ENCODE measurements at regions of chr6 and their contacts with region 1.

Region 1: DNA sequence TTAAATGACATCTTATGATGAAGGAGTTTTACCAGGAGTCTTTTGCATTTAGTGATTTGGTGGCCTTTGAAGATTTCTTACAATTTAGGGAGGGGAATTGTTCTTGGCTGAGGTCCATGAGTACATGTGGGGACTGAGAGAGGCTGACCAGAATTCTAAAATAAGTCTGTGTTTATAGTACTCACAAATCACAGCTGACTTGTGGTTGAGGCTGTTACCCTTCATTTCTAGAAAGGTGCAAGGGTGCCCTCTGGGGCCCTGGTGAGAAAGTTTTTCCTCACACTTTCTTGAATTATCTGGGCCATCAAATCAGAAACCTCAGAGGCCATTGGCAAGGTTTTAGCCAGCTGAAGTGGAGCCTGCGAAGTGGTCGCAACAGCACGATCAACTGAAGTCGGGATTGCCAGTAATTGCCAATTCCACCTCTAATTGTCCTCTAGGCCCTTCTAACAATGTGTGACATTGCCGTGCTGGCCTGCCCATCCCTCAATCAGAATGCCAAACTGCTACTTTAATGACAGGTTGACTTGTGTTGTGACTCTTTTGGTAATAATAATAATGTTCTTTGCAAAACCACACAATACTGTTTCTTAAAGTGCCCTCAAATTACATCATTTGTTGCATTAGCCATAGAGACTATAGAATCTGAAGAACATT is 221.6 kb downstream of the OGFRL1 start:
- DNase-seq: peak; percentile 8
- H3K4me3 ChIP-seq: no peak overlapping the region
- H3K27ac ChIP-seq: no peak overlapping the region
- H3K4me1 ChIP-seq: no peaks in the 10 kb centered on the region
- H3K27me3 ChIP-seq: no peaks in the 10 kb centered on the region
- CTCF ChIP-seq: peak in 3 of 4 experiments; percentile 39 to 59 (median 56)
- POLR2A ChIP-seq: no peak

Region 2: GRCh38 chr6:70171236-70171635 is 1338.9 kb before region 1 on chr6:
- intact Hi-C with region 1: no loop called
- DNase-seq: no peak
- H3K4me3 ChIP-seq: no peak overlapping the region
- H3K27ac ChIP-seq: no peak overlapping the region
- H3K4me1 ChIP-seq: no peaks in the 10 kb centered on the region
- H3K27me3 ChIP-seq: no peaks in the 10 kb centered on the region
- CTCF ChIP-seq: no peak
- POLR2A ChIP-seq: no peak

Region 3: GRCh38 chr6:70884074-70884983 is 625.9 kb before region 1 on chr6:
- intact Hi-C with region 1: loop called (anchors 5 kb)
- DNase-seq: peak; percentile 54
- H3K4me3 ChIP-seq: no peak overlapping the region
- H3K27ac ChIP-seq: no peak overlapping the region
- H3K4me1 ChIP-seq: no peaks in the 10 kb centered on the region
- H3K27me3 ChIP-seq: no peaks in the 10 kb centered on the region
- CTCF ChIP-seq: peak; percentile 79 to 96 (median 88)
- POLR2A ChIP-seq: no peak

Region 4: GRCh38 chr6:71190809-71191208 is 319.4 kb before region 1 on chr6:
- intact Hi-C with region 1: loop called (anchors 10 kb)
- DNase-seq: no peak
- H3K4me3 ChIP-seq: no peak overlapping the region
- H3K27ac ChIP-seq: no peak overlapping the region
- H3K4me1 ChIP-seq: no peaks in the 10 kb centered on the region
- H3K27me3 ChIP-seq: no peaks in the 10 kb centered on the region
- CTCF ChIP-seq: peak in 2 of 4 experiments; percentile 32 to 40
- POLR2A ChIP-seq: no peak

Region 5: GRCh38 chr6:71383901-71384489 is 126.2 kb before region 1 on chr6:
- intact Hi-C with region 1: loop called (anchors 5 kb)
- DNase-seq: no peak
- H3K4me3 ChIP-seq: no peak overlapping the region
- H3K27ac ChIP-seq: no peak overlapping the region
- H3K4me1 ChIP-seq: no peaks in the 10 kb centered on the region
- H3K27me3 ChIP-seq: no peaks in the 10 kb centered on the region
- CTCF ChIP-seq: peak; percentile 63 to 70 (median 64)
- POLR2A ChIP-seq: no peak

Measured in prostate gland (tissue), 2 donors.